Prostate gland (tissue), 2 donors: ENCODE measurements at regions of chr16 and their contacts with region 1.

Region 1: GRCh38 chr16:21644674-21645073 is 7.7 kb downstream of the IGSF6 start:
- DNase-seq: no peak
- H3K4me3 ChIP-seq: no peak overlapping the region
- H3K27ac ChIP-seq: no peak overlapping the region
- H3K4me1 ChIP-seq: no peaks in the 10 kb centered on the region
- H3K27me3 ChIP-seq: no peaks in the 10 kb centered on the region
- CTCF ChIP-seq: no peak
- POLR2A ChIP-seq: no peak

Region 2: DNA sequence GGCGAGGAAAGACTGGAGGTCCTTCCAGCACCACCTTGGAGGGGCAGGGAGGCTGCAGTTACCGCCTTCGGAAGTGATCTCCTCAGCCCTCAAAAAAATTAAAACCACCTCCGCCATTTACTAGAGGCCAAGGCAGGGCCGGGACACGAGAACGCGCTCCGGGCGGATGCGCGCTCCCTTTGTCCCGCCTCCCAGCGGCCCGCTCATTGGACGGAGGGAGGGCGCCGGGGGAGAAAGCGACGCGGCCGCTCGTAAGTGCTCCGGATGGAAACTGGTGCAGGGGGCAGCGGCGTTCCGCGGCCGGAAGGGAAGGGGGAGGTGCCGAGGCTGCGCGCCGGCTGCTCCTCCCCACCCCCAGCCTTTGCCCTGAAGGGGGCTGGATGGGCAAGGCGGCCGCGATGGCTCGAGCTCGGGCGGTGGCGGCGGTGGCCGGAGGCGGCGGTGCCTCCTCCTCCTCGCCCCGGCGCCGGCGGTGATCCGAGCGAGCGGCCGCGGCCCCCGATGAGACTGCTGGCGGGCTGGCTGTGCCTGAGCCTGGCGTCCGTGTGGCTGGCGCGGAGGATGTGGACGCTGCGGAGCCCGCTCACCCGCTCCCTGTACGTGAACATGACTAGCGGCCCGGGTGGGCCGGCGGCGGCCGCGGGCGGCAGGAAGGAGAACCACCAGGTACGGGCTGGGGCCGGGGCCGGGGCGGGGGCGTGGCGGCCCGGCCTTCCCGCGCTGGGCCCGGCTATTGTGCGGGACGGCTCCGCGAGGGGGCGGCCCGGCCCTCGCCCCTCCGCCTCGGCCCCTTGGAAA is 45.2 kb before region 1 on chr16 and contains the start of gene METTL9:
- intact Hi-C with region 1: loop called (anchors 5 kb)
- DNase-seq: peak; percentile 94
- H3K4me3 ChIP-seq: peak within 1 kb of the TSS; percentile 93 to 96
- H3K27ac ChIP-seq: peak within 1 kb of the TSS; percentile 89 to 97
- H3K4me1 ChIP-seq: no peaks in the 10 kb centered on the region
- H3K27me3 ChIP-seq: no peaks in the 10 kb centered on the region
- CTCF ChIP-seq: peak in 2 of 4 experiments; percentile 24 to 28
- POLR2A ChIP-seq: peak; percentile 91
- total RNA-seq, gene METTL9: 98.9 to 160 TPM